ENCODE measurements at regions of chrX and their contacts with region 1.

Region 1: GRCh38 chrX:46573331-46573891 is at the start of gene CHST7:
- DNase-seq: peak; percentile 46
- H3K4me3 Mint-ChIP-seq: peak within 1 kb of the TSS; percentile 69
- H3K27ac Mint-ChIP-seq: peak within 1 kb of the TSS; percentile 89
- H3K4me1 Mint-ChIP-seq: peaks cover 39% of the 10 kb centered on the region
- H3K27me3 Mint-ChIP-seq: peaks cover 2% of the 10 kb centered on the region
- total RNA-seq, gene CHST7: 0.79 to 0.99 TPM

Region 2: DNA sequence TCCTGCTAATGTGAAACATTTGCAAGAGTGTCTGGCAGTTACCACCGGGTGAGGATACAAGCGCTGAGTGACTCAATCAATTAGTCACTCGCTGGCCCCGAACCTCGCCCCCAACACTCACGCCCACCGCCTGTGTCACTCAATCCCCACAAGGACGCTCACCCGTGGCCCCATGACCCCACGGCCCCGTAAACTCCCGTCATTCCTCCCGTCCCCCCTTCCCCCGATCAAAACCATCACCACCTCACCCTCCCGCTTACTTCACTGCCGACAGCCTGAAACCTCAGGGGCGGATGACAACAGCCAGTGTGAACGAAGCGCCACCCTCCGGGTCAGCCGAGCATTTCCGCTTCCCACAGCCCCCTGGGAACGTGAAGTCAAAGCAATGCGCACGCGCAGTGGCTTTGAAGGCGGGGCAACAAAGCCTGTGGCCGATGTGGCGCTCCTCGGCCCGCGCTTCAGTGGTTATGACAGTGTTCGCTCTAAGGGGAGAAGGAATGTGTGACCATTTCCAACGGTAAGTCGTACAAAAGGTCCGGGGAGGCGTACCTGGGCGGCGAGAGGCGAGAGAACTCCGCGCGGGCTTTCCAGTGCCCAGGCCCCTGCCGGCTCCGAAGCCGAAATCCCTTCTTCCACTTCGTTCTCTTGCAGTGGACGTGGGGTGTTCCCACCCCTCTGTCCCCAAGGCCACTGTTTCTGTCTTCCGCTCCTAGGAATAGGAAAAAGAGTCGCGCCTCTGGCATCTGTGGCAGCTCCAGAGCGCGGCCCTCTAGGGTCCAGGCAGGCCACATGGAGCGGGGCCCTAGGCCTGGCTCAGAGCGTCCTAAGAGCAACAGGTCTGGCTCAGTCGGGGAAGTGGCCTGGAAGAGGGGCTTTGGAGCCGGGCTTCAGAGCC is 28.1 kb before region 1 on chrX and contains the start of gene ZNF674:
- CTCF ChIA-PET with region 1: no interaction called
- intact Hi-C with region 1: loop called (anchors 1 kb)
- DNase-seq: peak; percentile 94
- H3K4me3 Mint-ChIP-seq: peak within 1 kb of the TSS; percentile 95
- H3K27ac Mint-ChIP-seq: peak within 1 kb of the TSS; percentile 98
- H3K4me1 Mint-ChIP-seq: peaks cover 30% of the 10 kb centered on the region
- H3K27me3 Mint-ChIP-seq: no peaks in the 10 kb centered on the region
- total RNA-seq, gene ZNF674: 0.94 to 1.9 TPM

Region 3: GRCh38 chrX:46634577-46634976 is 61.2 kb after region 1 on chrX:
- CTCF ChIA-PET with region 1: no interaction called
- intact Hi-C with region 1: loop called (anchors 2 kb)
- DNase-seq: no peak
- H3K4me3 Mint-ChIP-seq: no peak overlapping the region
- H3K27ac Mint-ChIP-seq: no peak overlapping the region
- H3K4me1 Mint-ChIP-seq: peaks cover 21% of the 10 kb centered on the region
- H3K27me3 Mint-ChIP-seq: no peaks in the 10 kb centered on the region

Region 4: GRCh38 chrX:46686003-46686645 is 112.7 kb after region 1 on chrX:
- CTCF ChIA-PET with region 1: interaction called, 3 read pairs
- intact Hi-C with region 1: loop called (anchors 2 kb)
- DNase-seq: peak; percentile 62
- H3K4me3 Mint-ChIP-seq: no peak overlapping the region
- H3K27ac Mint-ChIP-seq: no peak overlapping the region
- H3K4me1 Mint-ChIP-seq: peaks cover 12% of the 10 kb centered on the region
- H3K27me3 Mint-ChIP-seq: no peaks in the 10 kb centered on the region

Measured in activated naive CD4-positive, alpha-beta T cell treated with anti-CD3 and anti-CD28 coated beads for 36 hours (primary cell).